ENCODE measurements at regions of chr1 and their contacts with region 1.

Region 1: GRCh38 chr1:10170239-10170574 is 40.2 kb upstream of the KIF1B start:
- DNase-seq: no peak
- ATAC-seq: no peak
- H3K4me3 ChIP-seq: no peak overlapping the region
- H3K4me3 Mint-ChIP-seq: peak overlapping the region in 1 of 10 donors; percentile 77
- H3K27ac ChIP-seq: no peak overlapping the region
- H3K27ac Mint-ChIP-seq: peak overlapping the region in 4 of 9 donors; percentile 12 to 89 (median 73)
- H3K4me1 ChIP-seq: peaks cover 0 to 7% of the 10 kb centered on the region in 2 donors
- H3K4me1 Mint-ChIP-seq: peaks cover 0 to 50% (median 4%) of the 10 kb centered on the region in 7 donors
- H3K27me3 ChIP-seq: no peaks in the 10 kb centered on the region
- H3K27me3 Mint-ChIP-seq: no peaks in the 10 kb centered on the region

Region 2: DNA sequence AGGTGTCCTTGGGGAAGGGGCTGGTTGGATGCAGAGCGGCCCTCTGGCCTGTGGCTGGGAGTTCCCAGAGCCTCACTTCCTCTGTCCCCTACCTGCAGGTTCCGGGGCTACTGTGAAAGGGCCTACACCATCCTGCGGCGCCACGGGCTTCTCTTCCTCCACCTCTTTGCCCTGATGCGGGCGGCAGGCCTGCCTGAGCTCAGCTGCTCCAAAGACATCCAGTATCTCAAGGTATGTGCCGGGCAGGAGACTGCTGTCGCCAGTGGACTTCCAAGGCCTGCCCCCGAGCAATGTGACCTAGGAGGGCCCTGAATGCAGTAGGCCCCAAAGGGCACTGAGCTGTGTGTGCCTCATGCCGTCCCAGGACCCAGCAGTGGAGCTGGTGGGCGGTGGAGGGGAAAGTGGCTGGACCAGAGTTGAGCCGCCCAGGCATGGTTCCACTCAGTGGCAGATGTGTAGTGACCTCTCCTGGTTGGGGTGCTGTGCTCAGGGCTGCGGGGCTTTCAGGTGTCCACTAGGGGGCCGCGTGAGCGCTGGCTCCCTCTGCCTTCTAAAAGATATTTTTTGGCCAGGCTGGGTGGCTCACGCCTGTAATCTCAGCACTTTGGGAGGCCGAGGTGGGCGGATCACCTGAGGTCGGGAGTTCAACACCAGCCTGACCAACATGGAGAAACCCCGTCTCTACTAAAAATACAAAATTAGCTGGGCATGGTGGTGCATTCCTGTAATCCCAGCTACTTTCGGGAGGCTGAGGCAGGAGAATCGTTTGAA is 445.3 kb before region 1 on chr1:
- CTCF ChIA-PET with region 1: no interaction called
- POLR2A ChIA-PET with region 1: no interaction called
- intact Hi-C with region 1: no loop called
- DNase-seq: peak; percentile 58 to 72 (median 64)
- ATAC-seq: peak; percentile 65
- H3K4me3 ChIP-seq: no peak overlapping the region
- H3K4me3 Mint-ChIP-seq: peak overlapping the region in 8 of 10 donors; percentile 14 to 68 (median 62)
- H3K27ac ChIP-seq: peak overlapping the region; percentile 51
- H3K27ac Mint-ChIP-seq: peak overlapping the region; percentile 73 to 88 (median 80)
- H3K4me1 ChIP-seq: peaks cover 36 to 83% of the 10 kb centered on the region in 2 donors
- H3K4me1 Mint-ChIP-seq: peaks cover 38 to 84% (median 60%) of the 10 kb centered on the region in 7 donors
- H3K27me3 ChIP-seq: no peaks in the 10 kb centered on the region
- H3K27me3 Mint-ChIP-seq: no peaks in the 10 kb centered on the region

Region 3: GRCh38 chr1:10186331-10187025 is 16.3 kb after region 1 on chr1:
- CTCF ChIA-PET with region 1: no interaction called
- POLR2A ChIA-PET with region 1: no interaction called
- intact Hi-C with region 1: loop called in 1 of 2 experiments (anchors 1 kb)
- DNase-seq: peak in 3 of 9 donors; percentile 12 to 38 (median 13)
- ATAC-seq: no peak
- H3K4me3 ChIP-seq: no peak overlapping the region
- H3K4me3 Mint-ChIP-seq: no peak overlapping the region
- H3K27ac ChIP-seq: no peak overlapping the region
- H3K27ac Mint-ChIP-seq: no peak overlapping the region
- H3K4me1 ChIP-seq: no peaks in the 10 kb centered on the region
- H3K4me1 Mint-ChIP-seq: peaks cover 0 to 4% (median 0%) of the 10 kb centered on the region in 7 donors
- H3K27me3 ChIP-seq: no peaks in the 10 kb centered on the region
- H3K27me3 Mint-ChIP-seq: peaks cover 0 to 2% (median 0%) of the 10 kb centered on the region in 5 donors

Measured in naive thymus-derived CD4-positive, alpha-beta T cell (primary cell).